ENCODE measurements at regions of chr6 and their contacts with region 1.

Region 1: GRCh38 chr6:44221291-44221960 is 2.0 kb upstream of the SLC29A1 start:
- DNase-seq: peak; percentile 72 to 80 (median 74)
- H3K4me3 ChIP-seq: no peak overlapping the region
- H3K4me3 Mint-ChIP-seq: peak overlapping the region in 4 of 8 donors; percentile 15 to 68 (median 29)
- H3K27ac ChIP-seq: no peak overlapping the region
- H3K27ac Mint-ChIP-seq: peak overlapping the region in 4 of 7 donors; percentile 44 to 72 (median 56)
- H3K4me1 ChIP-seq: peaks cover 29% of the 10 kb centered on the region
- H3K4me1 Mint-ChIP-seq: peaks cover 7 to 36% (median 21%) of the 10 kb centered on the region in 4 donors
- H3K27me3 ChIP-seq: no peaks in the 10 kb centered on the region
- H3K27me3 Mint-ChIP-seq: peaks cover 2 to 7% of the 10 kb centered on the region in 2 donors

Region 2: DNA sequence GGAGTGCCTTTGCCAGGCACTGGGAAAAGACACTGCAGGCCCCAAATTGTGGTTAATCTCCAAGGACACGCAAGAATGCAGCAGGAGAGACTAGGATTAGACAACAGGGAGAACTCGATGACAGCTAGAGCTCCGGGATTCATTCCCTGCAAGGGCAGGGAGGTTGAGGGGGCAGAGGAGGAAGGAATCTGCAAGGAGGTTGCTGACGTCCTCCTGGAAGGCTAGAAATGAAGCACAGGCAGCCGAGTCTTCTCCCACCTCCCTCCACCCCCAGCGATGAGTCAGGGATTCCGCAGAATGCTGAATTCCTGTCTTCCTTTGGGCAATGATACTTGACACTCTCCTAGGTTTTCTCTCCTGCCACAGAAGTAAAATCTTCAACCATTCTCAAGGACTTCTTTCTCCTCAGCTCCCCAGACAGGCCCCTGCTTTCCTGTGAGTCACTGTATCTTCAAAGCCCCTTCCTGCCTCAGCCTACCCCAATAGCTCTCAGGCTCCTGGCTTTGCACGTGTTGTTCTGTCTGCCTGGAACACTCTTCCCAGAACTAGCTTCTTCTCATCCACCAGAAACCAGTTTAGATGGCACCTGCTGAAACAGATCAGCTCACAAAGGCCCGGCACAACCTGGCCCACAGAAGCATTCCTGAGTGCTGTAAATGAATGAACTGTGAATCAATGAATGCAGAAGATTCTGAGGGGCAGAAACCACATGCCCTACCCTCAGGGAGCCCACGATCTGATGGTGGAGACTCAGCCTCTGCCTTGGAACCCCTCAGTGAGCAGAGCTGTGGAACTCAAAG is 179.8 kb before region 1 on chr6:
- CTCF ChIA-PET with region 1: no interaction called
- POLR2A ChIA-PET with region 1: no interaction called
- intact Hi-C with region 1: no loop called
- DNase-seq: no peak
- H3K4me3 ChIP-seq: no peak overlapping the region
- H3K4me3 Mint-ChIP-seq: no peak overlapping the region
- H3K27ac ChIP-seq: no peak overlapping the region
- H3K27ac Mint-ChIP-seq: no peak overlapping the region
- H3K4me1 ChIP-seq: no peaks in the 10 kb centered on the region
- H3K4me1 Mint-ChIP-seq: no peaks in the 10 kb centered on the region
- H3K27me3 ChIP-seq: no peaks in the 10 kb centered on the region
- H3K27me3 Mint-ChIP-seq: peaks cover 0 to 5% of the 10 kb centered on the region in 2 donors

Region 3: DNA sequence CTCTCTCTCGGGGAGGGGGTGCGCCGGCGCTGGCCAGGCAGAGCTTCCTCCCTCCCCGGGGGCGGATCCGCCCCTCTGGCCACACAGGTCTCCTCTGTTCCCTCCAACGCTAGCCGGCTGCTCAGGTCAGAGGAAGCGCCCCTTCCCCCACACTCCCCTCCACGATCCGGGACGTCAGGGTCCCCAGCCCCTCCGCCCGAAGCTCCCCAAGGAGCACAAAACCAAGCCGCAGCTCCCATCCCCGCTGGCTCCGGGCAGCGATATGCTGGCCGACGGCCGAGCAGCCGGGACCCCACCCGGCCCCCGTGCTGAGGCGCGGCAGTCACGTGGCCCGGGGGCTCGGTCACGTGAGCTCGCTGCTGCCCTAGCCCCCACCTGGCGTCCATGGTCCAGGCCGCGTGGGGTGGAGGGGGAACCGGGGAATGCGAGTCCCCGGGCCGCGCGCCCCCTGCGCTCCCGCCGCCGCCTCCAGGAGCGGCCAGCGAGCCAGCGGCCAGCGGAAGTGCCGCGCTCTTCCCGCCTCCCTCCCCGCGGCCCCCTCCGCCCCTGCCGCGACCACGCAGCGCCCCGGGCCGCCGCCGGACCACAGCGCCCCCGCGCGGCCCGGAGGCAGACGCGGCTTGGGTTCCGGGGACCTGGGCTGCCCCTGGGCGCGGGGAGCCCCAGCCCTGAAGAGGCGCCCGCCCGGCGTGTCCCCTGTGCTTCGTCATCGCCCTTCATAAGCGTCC is 35.8 kb after region 1 on chr6 and contains the start of gene SLC35B2:
- CTCF ChIA-PET with region 1: interaction called, 11 read pairs
- POLR2A ChIA-PET with region 1: interaction called, 21 read pairs
- intact Hi-C with region 1: loop called (anchors 2 kb)
- DNase-seq: peak; percentile 57 to 81 (median 70)
- H3K4me3 ChIP-seq: peak within 1 kb of the TSS; percentile 63 to 73
- H3K4me3 Mint-ChIP-seq: peak within 1 kb of the TSS; percentile 86 to 94 (median 89)
- H3K27ac ChIP-seq: peak within 1 kb of the TSS; percentile 82
- H3K27ac Mint-ChIP-seq: peak within 1 kb of the TSS; percentile 80 to 97 (median 96)
- H3K4me1 ChIP-seq: peaks cover 40% of the 10 kb centered on the region
- H3K4me1 Mint-ChIP-seq: peaks cover 33 to 62% (median 49%) of the 10 kb centered on the region in 4 donors
- H3K27me3 ChIP-seq: no peaks in the 10 kb centered on the region
- H3K27me3 Mint-ChIP-seq: no peaks in the 10 kb centered on the region
- total RNA-seq, gene SLC35B2: 20.7 to 20.9 TPM

Region 4: DNA sequence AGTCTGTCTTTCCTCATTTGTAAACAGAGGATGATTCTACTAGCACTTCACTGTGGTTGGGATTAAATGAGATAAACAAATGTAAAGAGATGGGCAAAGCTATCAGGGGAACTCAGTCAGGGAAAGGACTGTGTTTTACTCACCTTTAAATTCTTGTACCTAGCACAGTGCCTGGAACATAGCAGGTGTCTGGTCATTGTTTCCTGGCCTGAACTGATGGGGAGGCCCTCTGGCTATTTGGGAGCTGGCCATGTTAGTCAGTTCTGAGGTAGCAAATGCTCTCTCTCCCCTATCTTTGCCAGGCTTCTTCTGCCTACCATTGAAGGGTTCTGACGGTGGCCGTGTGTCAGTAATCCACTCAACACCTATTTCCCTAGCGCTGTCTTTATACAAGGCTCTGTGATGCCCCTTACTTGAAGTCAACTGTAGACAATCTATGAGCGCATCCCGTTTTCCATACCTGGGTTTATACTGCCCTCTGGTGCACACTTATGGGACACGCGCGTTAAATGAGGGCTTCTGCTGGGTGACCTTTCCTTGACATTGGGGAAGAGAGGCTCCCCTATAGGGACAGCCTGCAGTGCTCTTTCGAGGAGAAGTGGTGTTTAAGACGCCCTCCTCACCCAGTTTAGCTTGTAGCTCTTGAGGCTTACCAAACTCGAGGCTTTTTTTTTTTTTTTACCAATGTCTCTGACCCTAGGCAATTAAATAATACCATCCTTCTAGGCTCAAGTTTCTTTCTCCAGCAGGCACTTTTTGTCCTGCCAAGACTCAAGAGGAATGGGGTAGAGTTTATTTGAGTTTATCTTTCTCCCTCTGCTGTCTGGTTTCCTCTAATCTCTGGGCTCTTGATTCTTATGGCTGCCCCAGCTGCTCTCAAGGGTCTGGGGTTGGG is 117.0 kb after region 1 on chr6:
- CTCF ChIA-PET with region 1: interaction called, 3 read pairs
- POLR2A ChIA-PET with region 1: no interaction called
- intact Hi-C with region 1: loop called (anchors 1 kb)
- DNase-seq: peak; percentile 53 to 67 (median 65)
- H3K4me3 ChIP-seq: no peak overlapping the region
- H3K4me3 Mint-ChIP-seq: no peak overlapping the region
- H3K27ac ChIP-seq: no peak overlapping the region
- H3K27ac Mint-ChIP-seq: peak overlapping the region in 1 of 7 donors; percentile 12
- H3K4me1 ChIP-seq: no peaks in the 10 kb centered on the region
- H3K4me1 Mint-ChIP-seq: no peaks in the 10 kb centered on the region
- H3K27me3 ChIP-seq: peaks cover 12% of the 10 kb centered on the region
- H3K27me3 Mint-ChIP-seq: peaks cover 16 to 26% of the 10 kb centered on the region in 2 donors